Sigmoid colon (tissue), 7 donors: ENCODE measurements at regions of chr22 and their contacts with region 1.

Region 1: GRCh38 chr22:23281406-23282088 is 101.2 kb downstream of the BCR start:
- DNase-seq: peak; percentile 93
- H3K4me3 ChIP-seq: peak overlapping the region in 2 of 4 donors; percentile 23 to 24
- H3K27ac ChIP-seq: peak overlapping the region; percentile 81 to 91 (median 86)
- H3K4me1 ChIP-seq: peaks cover 0 to 69% (median 57%) of the 10 kb centered on the region in 4 donors
- H3K27me3 ChIP-seq: no peaks in the 10 kb centered on the region
- CTCF ChIP-seq: peak; percentile 97 to 98 (median 97)
- EP300 ChIP-seq: no peak
- POLR2A ChIP-seq: no peak

Region 2: GRCh38 chr22:23256986-23257888 is 24.3 kb before region 1 on chr22:
- intact Hi-C with region 1: no loop called
- DNase-seq: peak; percentile 80
- H3K4me3 ChIP-seq: no peak overlapping the region
- H3K27ac ChIP-seq: peak overlapping the region; percentile 62 to 81 (median 75)
- H3K4me1 ChIP-seq: peaks cover 0 to 26% (median 21%) of the 10 kb centered on the region in 4 donors
- H3K27me3 ChIP-seq: no peaks in the 10 kb centered on the region
- CTCF ChIP-seq: no peak
- EP300 ChIP-seq: no peak
- POLR2A ChIP-seq: no peak

Region 3: GRCh38 chr22:23302171-23303021 is 20.8 kb after region 1 on chr22:
- intact Hi-C with region 1: no loop called
- DNase-seq: no peak
- H3K4me3 ChIP-seq: no peak overlapping the region
- H3K27ac ChIP-seq: no peak overlapping the region
- H3K4me1 ChIP-seq: peaks cover 0 to 21% (median 18%) of the 10 kb centered on the region in 4 donors
- H3K27me3 ChIP-seq: no peaks in the 10 kb centered on the region
- CTCF ChIP-seq: no peak
- EP300 ChIP-seq: no peak
- POLR2A ChIP-seq: no peak

Region 4: GRCh38 chr22:23401111-23401909 is 119.8 kb after region 1 on chr22:
- intact Hi-C with region 1: no loop called
- DNase-seq: peak; percentile 56
- H3K4me3 ChIP-seq: no peak overlapping the region
- H3K27ac ChIP-seq: no peak overlapping the region
- H3K4me1 ChIP-seq: peaks cover 0 to 10% (median 9%) of the 10 kb centered on the region in 4 donors
- H3K27me3 ChIP-seq: peaks cover 0 to 12% (median 0%) of the 10 kb centered on the region in 3 donors
- CTCF ChIP-seq: no peak
- EP300 ChIP-seq: no peak
- POLR2A ChIP-seq: no peak

Region 5: DNA sequence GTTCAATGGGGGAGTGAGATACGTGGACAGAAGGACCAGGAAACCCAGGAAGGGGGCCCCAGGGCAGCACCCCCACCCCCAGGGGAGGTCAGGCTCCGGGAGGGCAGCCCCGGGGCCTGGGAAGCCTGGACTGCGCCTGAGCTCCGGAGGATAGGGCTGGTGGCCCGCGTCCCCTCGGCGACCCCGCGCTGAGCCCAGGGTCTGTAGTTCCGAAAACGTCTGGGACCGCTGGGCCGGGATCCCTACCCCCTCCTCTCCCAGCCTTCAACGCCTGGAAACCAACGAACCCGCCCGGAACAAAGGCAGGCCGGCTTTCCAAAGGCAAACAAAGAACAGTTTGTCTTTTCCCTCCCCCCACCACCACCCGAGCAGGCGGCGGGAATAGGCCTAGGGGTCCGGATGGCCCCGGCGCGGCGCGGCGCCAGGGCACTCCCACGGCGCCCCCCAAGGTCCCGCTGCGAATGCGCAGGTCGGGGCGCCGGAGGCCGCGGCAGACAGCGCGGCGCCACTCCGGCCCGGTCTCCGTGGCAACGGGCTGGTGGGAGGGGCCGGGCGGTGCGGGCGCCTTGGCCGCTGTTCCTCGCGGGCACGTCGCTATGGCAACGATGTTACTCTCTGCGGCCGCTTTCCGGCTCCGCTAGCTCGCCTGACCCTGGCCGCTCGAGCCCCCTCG is 240.0 kb after region 1 on chr22:
- intact Hi-C with region 1: loop called (anchors 10 kb)
- DNase-seq: peak; percentile 95
- H3K4me3 ChIP-seq: peak overlapping the region; percentile 28 to 57 (median 45)
- H3K27ac ChIP-seq: peak overlapping the region; percentile 89 to 98 (median 94)
- H3K4me1 ChIP-seq: peaks cover 0 to 38% (median 30%) of the 10 kb centered on the region in 4 donors
- H3K27me3 ChIP-seq: no peaks in the 10 kb centered on the region
- CTCF ChIP-seq: no peak
- EP300 ChIP-seq: peak in 1 of 4 donors; percentile 51
- POLR2A ChIP-seq: no peak